Dendritic cell treated with granulocyte-macrophage colony-stimulating factor and Interleukin-4, amounts not matched to agents 40 ng/mL and 50 ng/mL, for 4 days (primary cell): ENCODE measurements at regions of chr5 and their contacts with region 1.

Region 1: GRCh38 chr5:81751009-81751835 is at the start of gene SSBP2:
- H3K4me3 Mint-ChIP-seq: peak within 1 kb of the TSS; percentile 92
- H3K27ac Mint-ChIP-seq: peak within 1 kb of the TSS; percentile 97
- H3K4me1 Mint-ChIP-seq: peaks cover 21% of the 10 kb centered on the region
- H3K27me3 Mint-ChIP-seq: peaks cover 6% of the 10 kb centered on the region

Region 2: GRCh38 chr5:81425569-81425968 is 325.7 kb before region 1 on chr5:
- intact Hi-C with region 1: loop called (anchors 5 kb)
- H3K4me3 Mint-ChIP-seq: no peak overlapping the region
- H3K27ac Mint-ChIP-seq: no peak overlapping the region
- H3K4me1 Mint-ChIP-seq: peaks cover 19% of the 10 kb centered on the region
- H3K27me3 Mint-ChIP-seq: no peaks in the 10 kb centered on the region

Region 3: DNA sequence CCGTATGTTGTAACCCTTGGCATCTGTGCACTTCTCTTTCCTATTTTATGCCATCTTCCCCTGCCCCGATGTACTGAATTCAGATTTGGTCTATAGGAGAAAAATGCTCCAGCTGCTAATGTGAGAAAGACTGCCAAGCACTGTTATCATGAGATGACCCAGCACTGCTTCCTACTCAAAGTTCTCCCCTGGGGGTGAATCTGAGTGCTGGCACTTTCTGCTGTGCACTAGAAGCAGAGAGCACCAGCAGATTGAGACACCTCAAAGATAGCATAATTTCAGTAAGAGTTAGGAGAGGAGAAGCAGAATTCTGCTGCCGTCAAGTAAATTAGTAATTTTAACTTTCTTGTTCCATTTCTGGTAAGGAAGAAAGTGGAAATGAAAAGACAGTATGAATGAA is 264.5 kb before region 1 on chr5:
- intact Hi-C with region 1: no loop called
- H3K4me3 Mint-ChIP-seq: no peak overlapping the region
- H3K27ac Mint-ChIP-seq: no peak overlapping the region
- H3K4me1 Mint-ChIP-seq: no peaks in the 10 kb centered on the region
- H3K27me3 Mint-ChIP-seq: no peaks in the 10 kb centered on the region

Region 4: DNA sequence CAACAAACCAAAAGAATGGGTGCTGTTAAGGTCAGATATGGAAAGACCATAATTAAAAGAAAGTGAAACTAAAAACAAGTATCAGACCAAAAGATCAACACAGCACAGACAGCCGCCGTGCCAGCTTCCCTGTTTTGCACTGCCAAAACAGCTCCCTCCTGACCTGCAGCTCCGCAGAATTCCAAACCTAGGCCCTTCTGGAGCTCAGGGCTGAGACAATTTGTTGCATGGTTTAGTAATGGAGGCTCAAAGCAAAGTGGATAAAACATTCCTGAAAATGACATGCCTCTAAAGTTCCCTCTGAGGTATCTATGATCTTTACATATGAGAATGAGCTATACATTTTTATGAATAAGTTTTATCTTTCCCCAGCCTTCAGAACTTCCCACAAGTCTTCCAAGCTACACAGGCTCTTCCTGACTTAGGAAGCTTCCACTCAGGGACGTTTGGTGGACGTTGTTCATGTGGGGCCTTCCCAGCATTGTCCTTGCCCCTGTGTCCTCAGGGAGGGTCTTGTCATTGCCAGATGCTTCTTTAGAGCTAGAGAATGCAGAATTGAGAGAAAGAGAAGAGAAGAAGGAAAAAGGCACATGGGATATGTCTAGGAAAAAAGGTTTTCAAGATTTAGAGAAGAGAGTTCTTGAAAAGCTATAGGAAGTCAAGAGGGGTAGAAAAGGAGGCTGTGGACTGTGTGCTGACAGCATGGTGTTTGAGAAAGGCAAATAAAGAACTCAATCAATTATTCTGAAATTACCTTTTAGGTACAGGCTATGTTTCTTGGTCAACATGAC is 28.1 kb after region 1 on chr5:
- intact Hi-C with region 1: loop called (anchors 2 kb)
- H3K4me3 Mint-ChIP-seq: peak overlapping the region; percentile 50
- H3K27ac Mint-ChIP-seq: peak overlapping the region; percentile 86
- H3K4me1 Mint-ChIP-seq: peaks cover 25% of the 10 kb centered on the region
- H3K27me3 Mint-ChIP-seq: no peaks in the 10 kb centered on the region

Region 5: GRCh38 chr5:81851481-81852178 is 100.4 kb after region 1 on chr5:
- intact Hi-C with region 1: loop called (anchors 1 kb)
- H3K4me3 Mint-ChIP-seq: peak overlapping the region; percentile 79
- H3K27ac Mint-ChIP-seq: peak overlapping the region; percentile 96
- H3K4me1 Mint-ChIP-seq: peaks cover 55% of the 10 kb centered on the region
- H3K27me3 Mint-ChIP-seq: no peaks in the 10 kb centered on the region

Region 6: DNA sequence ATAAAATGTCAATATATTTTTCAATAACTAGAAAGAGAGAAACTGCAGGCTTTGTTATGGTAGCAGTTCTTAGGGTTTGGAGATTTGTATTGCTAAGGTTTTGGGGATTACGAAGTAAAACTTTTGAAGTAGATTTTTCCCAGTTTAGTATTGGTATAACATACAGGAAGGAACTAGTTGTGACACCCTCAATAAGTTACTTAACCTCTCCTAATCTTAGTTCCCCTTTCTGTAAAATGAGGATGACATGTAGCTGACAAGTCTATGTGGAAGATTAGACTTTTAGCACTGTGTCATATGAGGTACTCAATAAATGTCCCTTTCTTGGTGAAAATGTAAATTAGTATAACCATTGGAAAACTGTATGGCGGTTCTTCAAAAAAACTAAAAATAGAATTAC is 147.2 kb after region 1 on chr5:
- intact Hi-C with region 1: no loop called
- H3K4me3 Mint-ChIP-seq: no peak overlapping the region
- H3K27ac Mint-ChIP-seq: peak overlapping the region; percentile 63
- H3K4me1 Mint-ChIP-seq: peaks cover 38% of the 10 kb centered on the region
- H3K27me3 Mint-ChIP-seq: no peaks in the 10 kb centered on the region

Region 7: DNA sequence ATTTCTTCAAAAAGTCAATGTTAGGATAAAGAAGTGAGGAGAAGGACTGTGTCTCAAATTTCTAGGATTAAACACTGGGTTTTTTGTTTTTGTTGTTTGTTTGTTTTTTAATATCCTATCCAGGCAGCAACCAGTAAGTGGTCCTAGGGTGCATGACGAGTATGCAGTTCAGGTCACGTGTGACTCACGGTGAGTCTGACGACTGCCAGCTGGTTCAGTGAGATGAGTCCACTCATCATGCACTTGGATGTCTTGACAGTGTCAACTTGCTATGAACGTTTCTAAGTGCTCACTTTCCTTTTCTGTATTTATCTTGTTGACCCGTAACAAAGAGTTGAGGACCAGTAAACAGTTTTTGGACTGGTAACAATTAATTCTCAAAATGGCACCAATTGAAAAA is 253.3 kb after region 1 on chr5:
- intact Hi-C with region 1: no loop called
- H3K4me3 Mint-ChIP-seq: no peak overlapping the region
- H3K27ac Mint-ChIP-seq: no peak overlapping the region
- H3K4me1 Mint-ChIP-seq: no peaks in the 10 kb centered on the region
- H3K27me3 Mint-ChIP-seq: no peaks in the 10 kb centered on the region

Region 8: GRCh38 chr5:82174128-82174918 is 423.1 kb after region 1 on chr5:
- intact Hi-C with region 1: loop called (anchors 10 kb)
- H3K4me3 Mint-ChIP-seq: no peak overlapping the region
- H3K27ac Mint-ChIP-seq: peak overlapping the region; percentile 45
- H3K4me1 Mint-ChIP-seq: peaks cover 15% of the 10 kb centered on the region
- H3K27me3 Mint-ChIP-seq: no peaks in the 10 kb centered on the region